Naive thymus-derived CD4-positive, alpha-beta T cell (primary cell): ENCODE measurements at regions of chr3 and their contacts with region 1.

Region 1: GRCh38 chr3:143847787-143848631 is at the start of gene SLC9A9:
- DNase-seq: peak in 8 of 9 donors; percentile 11 to 50 (median 40)
- ATAC-seq: peak; percentile 93
- H3K4me3 ChIP-seq: peak within 1 kb of the TSS; percentile 71
- H3K4me3 Mint-ChIP-seq: peak within 1 kb of the TSS; percentile 88 to 98 (median 96)
- H3K27ac ChIP-seq: peak within 1 kb of the TSS; percentile 72
- H3K27ac Mint-ChIP-seq: peak within 1 kb of the TSS; percentile 80 to 96 (median 90)
- H3K4me1 ChIP-seq: peaks cover 17 to 21% of the 10 kb centered on the region in 2 donors
- H3K4me1 Mint-ChIP-seq: peaks cover 31 to 62% (median 55%) of the 10 kb centered on the region in 7 donors
- H3K27me3 ChIP-seq: no peaks in the 10 kb centered on the region
- H3K27me3 Mint-ChIP-seq: peaks cover 0 to 4% (median 0%) of the 10 kb centered on the region in 5 donors
- total RNA-seq, gene SLC9A9: 9.3 to 21.9 (median 16.6) TPM

Region 2: DNA sequence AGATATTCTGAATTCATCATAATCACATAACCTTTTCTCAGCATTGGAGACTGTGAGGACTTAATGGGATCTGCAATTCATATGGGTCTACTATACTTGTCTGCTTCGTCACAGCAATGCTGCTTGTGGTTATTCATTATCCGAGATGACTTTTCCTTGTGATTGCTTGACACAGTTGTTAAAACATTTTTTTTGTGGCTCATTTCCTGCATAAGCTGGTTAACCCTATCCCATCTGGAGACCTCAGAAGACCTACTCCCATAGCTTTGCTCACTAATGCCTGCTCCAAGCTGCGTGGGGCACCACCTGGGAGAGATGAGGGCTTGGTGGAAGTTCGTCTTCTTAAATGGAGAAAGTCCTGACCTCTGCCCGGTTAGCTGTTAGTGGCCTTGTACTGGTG is 367.7 kb before region 1 on chr3:
- CTCF ChIA-PET with region 1: no interaction called
- POLR2A ChIA-PET with region 1: no interaction called
- intact Hi-C with region 1: no loop called
- DNase-seq: no peak
- ATAC-seq: no peak
- H3K4me3 ChIP-seq: no peak overlapping the region
- H3K4me3 Mint-ChIP-seq: no peak overlapping the region
- H3K27ac ChIP-seq: no peak overlapping the region
- H3K27ac Mint-ChIP-seq: peak overlapping the region in 1 of 9 donors; percentile 57
- H3K4me1 ChIP-seq: no peaks in the 10 kb centered on the region
- H3K4me1 Mint-ChIP-seq: peaks cover 0 to 1% (median 0%) of the 10 kb centered on the region in 7 donors
- H3K27me3 ChIP-seq: no peaks in the 10 kb centered on the region
- H3K27me3 Mint-ChIP-seq: no peaks in the 10 kb centered on the region

Region 3: GRCh38 chr3:143751643-143752178 is 96.3 kb before region 1 on chr3:
- CTCF ChIA-PET with region 1: no interaction called
- POLR2A ChIA-PET with region 1: no interaction called
- intact Hi-C with region 1: loop called in 1 of 2 experiments (anchors 1 kb)
- DNase-seq: peak; percentile 12 to 83 (median 75)
- ATAC-seq: peak; percentile 80
- H3K4me3 ChIP-seq: peak overlapping the region; percentile 42
- H3K4me3 Mint-ChIP-seq: peak overlapping the region; percentile 67 to 89 (median 78)
- H3K27ac ChIP-seq: peak overlapping the region; percentile 63
- H3K27ac Mint-ChIP-seq: peak overlapping the region; percentile 88 to 100 (median 94)
- H3K4me1 ChIP-seq: peaks cover 16 to 35% of the 10 kb centered on the region in 2 donors
- H3K4me1 Mint-ChIP-seq: peaks cover 20 to 71% (median 68%) of the 10 kb centered on the region in 7 donors
- H3K27me3 ChIP-seq: no peaks in the 10 kb centered on the region
- H3K27me3 Mint-ChIP-seq: no peaks in the 10 kb centered on the region

Region 4: GRCh38 chr3:143775459-143775858 is 72.5 kb before region 1 on chr3:
- CTCF ChIA-PET with region 1: no interaction called
- POLR2A ChIA-PET with region 1: no interaction called
- intact Hi-C with region 1: loop called (anchors 1 kb)
- DNase-seq: peak in 6 of 9 donors; percentile 23 to 58 (median 46)
- ATAC-seq: peak; percentile 86
- H3K4me3 ChIP-seq: no peak overlapping the region
- H3K4me3 Mint-ChIP-seq: peak overlapping the region in 1 of 10 donors; percentile 38
- H3K27ac ChIP-seq: no peak overlapping the region
- H3K27ac Mint-ChIP-seq: no peak overlapping the region
- H3K4me1 ChIP-seq: no peaks in the 10 kb centered on the region
- H3K4me1 Mint-ChIP-seq: peaks cover 0 to 6% (median 3%) of the 10 kb centered on the region in 7 donors
- H3K27me3 ChIP-seq: no peaks in the 10 kb centered on the region
- H3K27me3 Mint-ChIP-seq: no peaks in the 10 kb centered on the region

Region 5: DNA sequence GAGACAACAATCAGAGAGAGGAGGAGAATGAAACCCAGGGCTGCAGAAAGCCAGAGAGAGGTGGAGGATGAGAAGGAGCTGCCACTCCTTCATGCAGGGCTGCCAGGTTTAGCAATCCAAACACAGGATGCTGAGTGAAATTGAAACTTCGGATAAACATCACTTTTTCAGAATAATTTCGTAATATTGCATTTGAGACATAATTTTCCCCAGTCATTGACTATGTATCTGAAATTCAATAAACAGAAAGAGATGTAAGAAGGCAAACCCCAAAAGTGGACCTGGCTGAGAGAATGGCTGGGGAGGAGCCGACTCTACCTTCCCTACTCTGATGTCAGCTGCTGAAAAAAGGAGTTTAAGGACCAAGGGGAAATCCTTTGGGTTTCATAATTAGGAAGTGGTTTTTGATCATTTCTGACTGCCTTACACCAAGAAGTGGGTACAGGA is 33.5 kb before region 1 on chr3:
- CTCF ChIA-PET with region 1: no interaction called
- POLR2A ChIA-PET with region 1: no interaction called
- intact Hi-C with region 1: loop called in 1 of 2 experiments (anchors 5 kb)
- DNase-seq: no peak
- ATAC-seq: peak; percentile 65
- H3K4me3 ChIP-seq: no peak overlapping the region
- H3K4me3 Mint-ChIP-seq: peak overlapping the region in 2 of 10 donors; percentile 2 to 47
- H3K27ac ChIP-seq: no peak overlapping the region
- H3K27ac Mint-ChIP-seq: peak overlapping the region in 2 of 9 donors; percentile 10 to 33
- H3K4me1 ChIP-seq: peaks cover 0 to 4% of the 10 kb centered on the region in 2 donors
- H3K4me1 Mint-ChIP-seq: peaks cover 9 to 23% (median 13%) of the 10 kb centered on the region in 7 donors
- H3K27me3 ChIP-seq: no peaks in the 10 kb centered on the region
- H3K27me3 Mint-ChIP-seq: no peaks in the 10 kb centered on the region

Region 6: GRCh38 chr3:143825513-143825912 is 22.5 kb before region 1 on chr3:
- CTCF ChIA-PET with region 1: no interaction called
- POLR2A ChIA-PET with region 1: interaction called, 4 read pairs
- intact Hi-C with region 1: loop called (anchors 1 kb)
- DNase-seq: peak in 7 of 9 donors; percentile 4 to 56 (median 41)
- ATAC-seq: peak; percentile 85
- H3K4me3 ChIP-seq: no peak overlapping the region
- H3K4me3 Mint-ChIP-seq: peak overlapping the region in 8 of 10 donors; percentile 7 to 58 (median 30)
- H3K27ac ChIP-seq: no peak overlapping the region
- H3K27ac Mint-ChIP-seq: peak overlapping the region in 7 of 9 donors; percentile 23 to 73 (median 38)
- H3K4me1 ChIP-seq: peaks cover 10 to 22% of the 10 kb centered on the region in 2 donors
- H3K4me1 Mint-ChIP-seq: peaks cover 25 to 50% (median 30%) of the 10 kb centered on the region in 7 donors
- H3K27me3 ChIP-seq: no peaks in the 10 kb centered on the region
- H3K27me3 Mint-ChIP-seq: no peaks in the 10 kb centered on the region

Region 7: DNA sequence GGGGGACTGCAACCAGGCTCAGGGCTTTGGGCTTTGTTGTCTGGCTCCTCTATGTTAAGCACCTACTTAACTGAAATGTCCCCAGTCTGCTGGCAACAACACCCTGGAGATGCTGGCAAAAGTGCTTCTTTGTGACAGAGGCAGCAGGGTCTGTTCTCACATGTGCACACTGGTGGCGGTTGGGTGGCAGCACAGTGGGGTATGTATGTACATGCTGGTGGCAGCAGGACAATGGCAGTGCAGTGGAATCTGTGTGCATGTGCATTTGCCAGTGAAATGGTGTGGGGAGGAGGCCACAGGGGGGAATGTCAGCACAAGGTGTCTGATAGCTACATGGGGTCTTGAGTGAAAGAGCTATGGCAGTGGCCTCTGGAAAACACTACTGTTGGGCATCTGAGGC is 953.9 kb after region 1 on chr3:
- CTCF ChIA-PET with region 1: no interaction called
- POLR2A ChIA-PET with region 1: no interaction called
- intact Hi-C with region 1: no loop called
- DNase-seq: no peak
- ATAC-seq: no peak
- H3K4me3 ChIP-seq: no peak overlapping the region
- H3K4me3 Mint-ChIP-seq: no peak overlapping the region
- H3K27ac ChIP-seq: no peak overlapping the region
- H3K27ac Mint-ChIP-seq: no peak overlapping the region
- H3K4me1 ChIP-seq: no peaks in the 10 kb centered on the region
- H3K4me1 Mint-ChIP-seq: no peaks in the 10 kb centered on the region
- H3K27me3 ChIP-seq: no peaks in the 10 kb centered on the region
- H3K27me3 Mint-ChIP-seq: no peaks in the 10 kb centered on the region